Dorsolateral prefrontal cortex (tissue), 120 donors: ENCODE measurements at regions of chr9 and their contacts with region 1.

Region 1: GRCh38 chr9:75071530-75072124 is 16.3 kb downstream of the NMRK1 start:
- DNase-seq: peak in 1 of 10 donors; percentile 42
- H3K4me3 ChIP-seq: no peak overlapping the region
- H3K27ac ChIP-seq: no peak overlapping the region
- H3K27me3 ChIP-seq: no peaks in the 10 kb centered on the region
- CTCF ChIP-seq: no peak

Region 2: DNA sequence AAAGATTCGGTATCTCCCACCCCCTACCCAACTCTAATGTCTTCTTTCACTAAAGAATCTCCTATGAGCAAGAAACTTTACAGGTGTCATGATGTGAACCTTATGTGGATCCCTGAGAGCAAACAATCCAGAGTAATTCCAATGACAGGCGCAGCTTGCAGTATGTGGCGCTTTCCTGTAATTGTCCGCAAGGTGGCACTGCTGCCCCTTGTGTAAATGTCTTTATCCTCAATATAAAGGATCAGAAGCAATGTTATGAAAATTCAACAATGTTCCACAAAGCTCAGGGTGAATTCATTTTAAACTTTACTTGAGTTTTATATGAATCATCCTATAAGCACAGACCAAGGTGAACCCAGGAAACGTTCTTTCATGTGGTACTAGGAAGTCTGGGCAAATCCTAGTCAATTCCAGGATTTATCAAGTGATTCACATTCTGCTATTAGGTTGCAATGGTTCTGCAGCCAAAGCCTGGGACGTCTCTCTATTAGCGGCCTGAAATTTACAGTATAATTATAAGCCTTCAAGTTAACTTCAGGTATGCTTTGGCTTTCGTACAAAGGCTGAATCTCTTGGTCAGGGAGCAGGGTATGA is 297.6 kb before region 1 on chr9:
- intact Hi-C with region 1: loop called in 1 of 2 experiments (anchors 2 kb)
- DNase-seq: peak; percentile 72 to 94 (median 84)
- H3K4me3 ChIP-seq: no peak overlapping the region
- H3K27ac ChIP-seq: peak overlapping the region in 4 of 59 donors; percentile 20 to 83 (median 30)
- H3K27me3 ChIP-seq: peaks cover 0 to 2% (median 0%) of the 10 kb centered on the region in 45 donors
- CTCF ChIP-seq: peak; percentile 83 to 100 (median 94)

Region 3: DNA sequence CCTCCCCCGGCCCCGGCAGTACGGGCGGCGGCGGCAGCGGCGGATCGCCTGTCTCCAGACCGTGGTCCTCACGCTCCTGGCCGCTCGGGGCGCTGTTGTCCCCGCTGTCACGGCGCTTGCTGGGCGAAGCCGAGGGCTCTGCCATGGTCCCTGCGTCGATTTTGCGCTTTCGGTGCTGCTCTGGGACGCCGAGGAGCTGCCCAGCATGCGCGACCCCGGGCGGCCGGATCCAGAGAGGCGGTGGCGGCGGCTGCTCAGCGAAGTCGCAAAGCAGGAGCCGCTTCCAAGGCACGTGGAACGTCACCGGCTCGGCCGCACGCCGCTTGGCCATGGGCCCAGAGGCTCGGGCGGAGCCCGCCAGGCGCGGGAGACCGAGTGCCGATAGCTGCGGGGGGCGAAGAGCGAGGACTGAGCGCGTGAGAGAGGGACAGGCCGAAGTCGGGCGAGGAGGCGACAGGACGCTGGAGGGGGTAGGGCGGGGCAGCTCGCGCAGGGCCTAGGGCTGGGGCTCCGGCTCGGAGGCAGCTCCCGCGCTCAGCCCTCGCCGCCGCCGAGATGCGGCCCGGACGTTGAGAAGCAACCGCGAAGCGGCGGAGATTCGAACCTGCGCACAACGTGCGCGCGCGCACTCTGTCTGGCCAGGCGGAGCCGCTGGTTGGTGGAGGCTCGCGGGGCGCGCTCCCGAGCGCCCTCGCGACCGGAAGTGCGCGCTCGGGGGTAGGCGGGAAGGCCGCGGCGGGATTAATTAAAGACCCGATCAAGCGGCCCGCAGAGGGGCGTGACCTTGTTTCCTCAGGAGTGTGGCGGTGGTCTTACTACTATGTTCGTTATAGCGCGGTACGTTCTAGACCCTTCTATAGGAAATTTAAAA is 119.1 kb before region 1 on chr9 and contains the start of gene C9orf40:
- intact Hi-C with region 1: no loop called
- DNase-seq: peak; percentile 78 to 94 (median 87)
- H3K4me3 ChIP-seq: peak within 1 kb of the TSS; percentile 58 to 95 (median 88)
- H3K27ac ChIP-seq: peak within 1 kb of the TSS; percentile 75 to 99 (median 96)
- H3K27me3 ChIP-seq: no peaks in the 10 kb centered on the region
- CTCF ChIP-seq: peak in 55 of 56 donors; percentile 24 to 86 (median 68)
- total RNA-seq, gene C9orf40: 5.0 to 13.6 (median 8.0) TPM